ENCODE measurements at regions of chr18 and their contacts with region 1.

Region 1: DNA sequence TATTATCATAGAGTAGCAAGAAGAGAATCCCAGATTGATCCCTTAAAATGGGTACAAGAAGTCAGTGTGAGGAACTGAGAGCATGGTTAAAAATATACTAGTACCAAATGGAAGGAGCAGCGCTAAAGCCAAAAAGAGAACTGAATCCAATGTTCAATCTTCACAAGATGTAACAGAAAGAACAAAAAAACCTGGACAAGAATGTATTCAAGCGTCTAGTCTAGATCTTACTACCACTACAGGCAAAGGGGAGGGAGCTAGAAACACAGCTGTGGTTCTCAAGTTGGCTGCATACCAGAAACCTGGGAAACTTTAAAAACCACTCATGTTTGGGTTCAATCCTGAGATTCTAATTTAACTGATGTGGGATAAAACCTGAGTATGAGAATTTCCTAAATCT is 57.5 kb downstream of the PIAS2 start:
- DNase-seq: no peak

Region 2: GRCh38 chr18:46281185-46282176 is 578.4 kb before region 1 on chr18:
- intact Hi-C with region 1: loop called (anchors 5 kb)
- DNase-seq: peak; percentile 44 to 96 (median 75)

Measured in posterior cingulate gyrus (tissue), 11 donors.